Posterior vena cava (tissue), 2 donors: ENCODE measurements at regions of chr5 and their contacts with region 1.

Region 1: GRCh38 chr5:172674155-172674554 is 33.1 kb downstream of the NEURL1B start:
- DNase-seq: no peak

Region 2: GRCh38 chr5:172659909-172660628 is 14.1 kb before region 1 on chr5:
- intact Hi-C with region 1: loop called in 1 of 2 experiments (anchors 1 kb)
- DNase-seq: peak; percentile 96